ENCODE measurements at regions of chr17 and their contacts with region 1.

Region 1: DNA sequence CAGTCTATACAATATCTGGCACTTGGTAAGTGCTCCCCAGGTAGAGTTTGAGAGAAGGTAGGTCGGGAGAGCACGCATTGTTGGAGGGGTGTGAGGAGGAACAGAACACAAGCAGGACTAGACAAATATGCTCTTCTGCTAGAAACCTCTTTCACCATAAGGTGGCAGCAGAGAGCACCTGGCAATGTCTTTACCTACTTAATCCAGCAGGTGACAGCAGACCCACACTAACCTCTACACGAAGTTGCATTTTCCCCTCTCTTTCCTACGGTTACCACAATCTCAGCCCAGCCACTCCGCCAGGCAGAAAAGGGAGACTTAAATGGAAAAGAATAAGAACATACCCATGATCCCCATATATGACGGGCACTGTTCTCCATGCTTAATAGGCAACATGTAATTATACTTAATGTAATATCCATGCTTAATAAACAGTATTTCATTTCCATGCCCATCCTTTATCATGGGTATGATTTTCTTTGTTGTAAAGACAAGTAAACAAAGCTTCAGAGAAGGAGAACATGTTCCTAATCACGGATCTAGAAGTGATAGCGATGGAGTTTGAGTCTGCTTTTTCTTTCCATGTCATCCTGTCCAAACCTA is 55.1 kb upstream of the CCL2 start:
- DNase-seq: peak; percentile 54 to 66
- ATAC-seq: peak; percentile 88

Region 2: GRCh38 chr17:34361478-34362061 is 161.5 kb after region 1 on chr17:
- intact Hi-C with region 1: loop called (anchors 2 to 10 kb)
- DNase-seq: peak; percentile 81 to 93
- ATAC-seq: peak; percentile 99

Measured in left colon (tissue), 2 donors.